Heart left ventricle (tissue), 16 donors: ENCODE measurements at regions of chr5 and their contacts with region 1.

Region 1: GRCh38 chr5:147404706-147405105 is 105.2 kb downstream of the DPYSL3 start:
- DNase-seq: no peak
- ATAC-seq: no peak
- H3K4me3 ChIP-seq: no peak overlapping the region
- H3K27ac ChIP-seq: peak overlapping the region; percentile 69 to 90 (median 84)
- H3K4me1 ChIP-seq: peaks cover 4 to 55% (median 40%) of the 10 kb centered on the region in 12 donors
- H3K27me3 ChIP-seq: no peaks in the 10 kb centered on the region
- CTCF ChIP-seq: no peak
- POLR2A ChIP-seq: no peak

Region 2: DNA sequence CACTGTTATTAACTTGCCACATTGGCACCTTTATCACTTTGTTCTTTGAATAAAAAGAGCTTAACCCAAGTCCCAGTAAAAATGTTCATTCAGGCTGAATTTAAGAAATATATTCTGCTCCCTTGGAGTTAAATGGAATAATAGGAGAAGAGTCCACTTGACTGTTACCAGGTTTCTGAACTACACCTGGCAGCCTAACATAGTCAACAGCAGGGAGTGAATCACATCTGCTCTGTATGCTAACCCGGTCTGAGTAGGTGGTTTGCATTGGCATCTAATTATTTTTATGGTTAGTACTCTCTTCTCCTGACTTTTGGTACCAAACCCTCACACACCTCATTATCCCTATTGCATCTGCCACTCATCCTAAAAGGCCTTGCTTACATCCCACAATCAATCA is 83.1 kb before region 1 on chr5:
- intact Hi-C with region 1: no loop called
- DNase-seq: no peak
- ATAC-seq: no peak
- H3K4me3 ChIP-seq: no peak overlapping the region
- H3K27ac ChIP-seq: no peak overlapping the region
- H3K4me1 ChIP-seq: no peaks in the 10 kb centered on the region
- H3K27me3 ChIP-seq: no peaks in the 10 kb centered on the region
- CTCF ChIP-seq: no peak
- POLR2A ChIP-seq: no peak

Region 3: GRCh38 chr5:147446523-147446922 is 41.8 kb after region 1 on chr5:
- intact Hi-C with region 1: loop called in 1 of 10 experiments (anchors 5 kb)
- DNase-seq: peak in 3 of 5 donors; percentile 23 to 60 (median 53)
- ATAC-seq: peak; percentile 78 to 91 (median 90)
- H3K4me3 ChIP-seq: no peak overlapping the region
- H3K27ac ChIP-seq: peak overlapping the region in 10 of 12 donors; percentile 3 to 89 (median 56)
- H3K4me1 ChIP-seq: peaks cover 0 to 63% (median 7%) of the 10 kb centered on the region in 12 donors
- H3K27me3 ChIP-seq: peaks cover 0 to 1% (median 0%) of the 10 kb centered on the region in 9 donors
- CTCF ChIP-seq: no peak
- POLR2A ChIP-seq: no peak

Region 4: DNA sequence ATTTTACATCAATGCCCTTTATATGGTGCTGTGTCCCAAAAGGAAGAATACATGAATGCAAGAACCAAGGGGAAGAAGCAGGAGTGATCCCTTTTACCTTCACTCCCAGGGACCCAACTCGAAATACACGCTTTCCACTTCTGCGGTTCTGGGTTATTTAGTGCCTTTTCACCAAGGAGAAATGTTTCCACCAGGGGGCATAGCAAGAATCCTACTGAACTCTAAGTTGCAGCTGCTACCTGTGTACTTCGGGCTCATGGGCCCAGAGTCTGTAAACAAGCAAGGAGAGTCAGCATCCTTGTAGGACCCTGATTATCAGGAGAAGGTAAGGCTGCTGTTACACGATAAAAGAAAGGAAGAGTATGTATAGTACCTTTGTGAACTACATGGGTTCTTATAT is 59.5 kb after region 1 on chr5:
- intact Hi-C with region 1: no loop called
- DNase-seq: no peak
- ATAC-seq: peak in 2 of 4 donors; percentile 27 to 30
- H3K4me3 ChIP-seq: no peak overlapping the region
- H3K27ac ChIP-seq: no peak overlapping the region
- H3K4me1 ChIP-seq: peaks cover 0 to 33% (median 11%) of the 10 kb centered on the region in 12 donors
- H3K27me3 ChIP-seq: no peaks in the 10 kb centered on the region
- CTCF ChIP-seq: peak in 11 of 12 donors; percentile 30 to 66 (median 42)
- POLR2A ChIP-seq: no peak